ENCODE measurements at regions of chr17 and their contacts with region 1.

Region 1: GRCh38 chr17:44141717-44142285 is at the start of gene HROB:
- DNase-seq: peak; percentile 100
- ATAC-seq: peak; percentile 53
- H3K4me3 ChIP-seq: peak within 1 kb of the TSS; percentile 89
- H3K27ac ChIP-seq: peak within 1 kb of the TSS; percentile 81
- H3K4me1 ChIP-seq: peaks cover 33% of the 10 kb centered on the region
- H3K27me3 ChIP-seq: no peaks in the 10 kb centered on the region
- CTCF ChIP-seq: peak; percentile 88
- total RNA-seq, gene HROB: 13.5 and 14.3 TPM in 2 replicates

Region 2: DNA sequence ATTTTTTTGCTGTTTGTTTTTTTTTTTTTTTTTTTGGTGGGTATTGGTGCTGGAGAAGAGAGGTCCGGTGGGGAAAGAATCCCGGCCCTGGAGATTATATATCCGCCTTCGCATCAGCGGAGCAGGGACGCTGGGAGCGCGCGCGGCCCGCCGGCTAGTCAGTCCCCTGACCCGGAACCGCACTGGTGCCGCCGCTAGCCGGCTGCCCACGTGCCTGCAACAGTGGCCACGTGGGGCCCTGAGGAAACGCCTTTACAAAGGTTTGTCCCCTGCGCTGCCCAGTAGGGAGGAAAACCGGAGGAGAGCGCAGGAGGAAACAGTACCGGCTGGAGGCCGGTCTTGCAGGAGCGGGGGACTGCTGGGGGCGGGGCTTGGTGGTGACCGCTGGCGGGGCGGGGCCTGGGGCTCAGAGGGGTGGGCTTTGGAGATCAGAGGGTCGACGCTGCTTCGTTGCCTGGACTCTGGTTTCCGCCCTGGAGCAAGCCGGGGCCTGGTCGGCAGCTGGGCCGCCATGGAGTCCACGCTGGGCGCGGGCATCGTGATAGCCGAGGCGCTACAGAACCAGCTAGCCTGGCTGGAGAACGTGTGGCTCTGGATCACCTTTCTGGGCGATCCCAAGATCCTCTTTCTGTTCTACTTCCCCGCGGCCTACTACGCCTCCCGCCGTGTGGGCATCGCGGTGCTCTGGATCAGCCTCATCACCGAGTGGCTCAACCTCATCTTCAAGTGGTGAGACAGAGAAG is 71.2 kb before region 1 on chr17 and contains the start of gene G6PC3:
- CTCF ChIA-PET with region 1: no interaction called
- POLR2A ChIA-PET with region 1: no interaction called
- intact Hi-C with region 1: loop called (anchors 2 kb)
- DNase-seq: peak; percentile 99
- ATAC-seq: peak; percentile 79
- H3K4me3 ChIP-seq: peak within 1 kb of the TSS; percentile 70
- H3K27ac ChIP-seq: peak within 1 kb of the TSS; percentile 85
- H3K4me1 ChIP-seq: peaks cover 26% of the 10 kb centered on the region
- H3K27me3 ChIP-seq: no peaks in the 10 kb centered on the region
- CTCF ChIP-seq: no peak
- total RNA-seq, gene G6PC3: 60.1 and 69.5 TPM in 2 replicates

Region 3: DNA sequence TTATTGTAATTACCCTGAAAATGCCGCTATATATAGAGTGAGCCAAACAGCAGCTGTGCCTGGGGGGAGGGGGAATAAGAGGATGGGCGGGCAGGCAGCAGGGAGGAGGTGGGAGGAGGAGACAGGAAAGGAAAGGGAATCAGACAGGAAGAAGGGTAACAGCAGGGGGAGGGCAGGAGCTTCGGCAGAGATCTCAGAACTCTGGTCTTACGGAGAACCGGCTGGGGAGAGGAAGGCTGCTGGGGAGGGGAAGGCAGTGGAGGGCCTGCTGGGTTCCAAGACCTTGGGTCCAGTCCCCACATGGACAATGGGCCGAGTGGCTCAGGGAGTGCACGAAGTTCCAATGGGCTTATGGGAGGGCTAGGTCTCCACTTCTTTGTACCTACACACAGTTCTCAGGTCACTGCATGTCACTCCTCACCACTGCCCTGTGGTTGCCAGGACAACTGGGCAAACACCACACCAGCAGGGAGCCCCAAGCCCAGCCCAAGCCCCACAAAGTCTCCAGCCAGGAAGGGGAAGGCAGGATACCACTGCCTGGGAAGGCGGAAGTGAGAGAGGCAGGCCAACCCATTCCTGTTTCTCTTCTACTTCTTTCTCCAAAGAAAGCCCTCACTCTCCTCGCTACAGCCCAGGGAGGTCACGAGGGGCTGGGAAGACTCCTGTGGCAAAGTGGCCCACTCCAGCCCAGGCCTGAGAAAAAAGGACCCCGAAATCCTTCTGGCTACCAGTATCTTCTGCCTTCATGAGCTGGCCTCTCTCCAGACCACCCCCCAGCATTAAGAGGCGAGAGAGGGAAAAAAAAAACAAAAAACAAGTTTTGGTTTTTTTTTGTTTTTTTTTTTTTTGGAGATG is 45.9 kb before region 1 on chr17:
- CTCF ChIA-PET with region 1: interaction called, 10 read pairs
- POLR2A ChIA-PET with region 1: no interaction called
- intact Hi-C with region 1: no loop called
- DNase-seq: peak; percentile 65
- ATAC-seq: peak; percentile 87
- H3K4me3 ChIP-seq: peak overlapping the region; percentile 17; the same call in 1 of the 2 replicates
- H3K27ac ChIP-seq: peak overlapping the region; percentile 57
- H3K4me1 ChIP-seq: peaks cover 14% of the 10 kb centered on the region
- H3K27me3 ChIP-seq: no peaks in the 10 kb centered on the region
- CTCF ChIP-seq: no peak

Region 4: DNA sequence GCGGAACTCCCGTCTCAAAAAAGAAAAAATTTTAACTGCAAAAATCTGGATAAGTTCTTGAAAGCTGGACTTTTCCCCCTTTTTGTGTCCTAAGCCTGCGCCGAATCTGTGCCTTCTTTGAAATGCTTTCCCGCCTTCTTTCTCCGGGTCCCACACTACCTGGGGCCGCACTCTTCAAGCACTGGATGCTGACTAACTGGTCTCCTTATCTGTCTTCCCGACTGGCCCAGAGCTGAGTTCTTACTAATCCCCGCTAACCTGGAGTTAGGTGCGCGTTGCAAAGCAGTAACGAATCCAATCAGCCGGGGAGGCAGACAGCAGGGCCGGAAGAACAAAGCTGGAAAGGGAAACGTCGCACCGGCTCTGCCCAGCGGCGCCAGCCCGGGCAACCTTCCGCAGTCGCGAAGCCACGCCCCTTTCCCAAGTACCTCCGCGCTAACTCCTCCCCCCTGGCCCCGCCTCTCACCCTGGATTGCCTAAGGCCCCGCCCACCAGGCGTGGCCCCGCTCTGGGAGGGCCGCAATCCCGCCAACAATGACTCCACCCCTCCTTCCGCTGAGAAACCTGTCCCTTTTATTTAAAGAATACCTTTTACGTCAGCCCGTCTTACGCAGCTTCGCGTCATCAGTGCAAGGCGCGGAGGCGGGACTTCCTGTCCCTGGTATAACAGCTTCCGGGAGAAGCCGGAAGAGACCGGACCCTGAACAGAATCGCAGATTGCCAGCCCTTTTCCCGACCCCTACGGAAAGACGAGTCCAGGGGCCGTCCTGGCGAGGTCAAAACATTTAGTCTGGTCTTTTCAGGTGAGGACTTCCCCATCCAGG is 44.7 kb after region 1 on chr17 and contains the start of gene TMUB2:
- CTCF ChIA-PET with region 1: interaction called, 4 read pairs
- POLR2A ChIA-PET with region 1: interaction called, 4 read pairs
- intact Hi-C with region 1: loop called (anchors 1 kb)
- DNase-seq: peak; percentile 100
- ATAC-seq: peak; percentile 88
- H3K4me3 ChIP-seq: peak within 1 kb of the TSS; percentile 94
- H3K27ac ChIP-seq: peak within 1 kb of the TSS; percentile 83
- H3K4me1 ChIP-seq: peaks cover 18% of the 10 kb centered on the region
- H3K27me3 ChIP-seq: no peaks in the 10 kb centered on the region
- CTCF ChIP-seq: no peak
- total RNA-seq, gene TMUB2: 38.3 and 43.4 TPM in 2 replicates

Region 5: GRCh38 chr17:44363613-44364159 is 221.9 kb after region 1 on chr17 and contains the start of gene FAM171A2:
- CTCF ChIA-PET with region 1: interaction called, 20 read pairs
- POLR2A ChIA-PET with region 1: no interaction called
- intact Hi-C with region 1: no loop called
- DNase-seq: peak; percentile 76
- ATAC-seq: peak; percentile 90
- H3K4me3 ChIP-seq: peak within 1 kb of the TSS; percentile 87
- H3K27ac ChIP-seq: no peak within 1 kb of the TSS
- H3K4me1 ChIP-seq: no peaks in the 10 kb centered on the region; the same call in 1 of the 2 replicates
- H3K27me3 ChIP-seq: no peaks in the 10 kb centered on the region
- CTCF ChIP-seq: peak; percentile 62
- total RNA-seq, gene FAM171A2: 16.3 and 22.6 TPM in 2 replicates